Activated T-helper 1 cell treated with anti-CD3 and anti-CD28 coated beads, Interleukin-12 subunit alpha, Interleukin-12 subunit beta, Interleukin-2, Interleukin-4 antibody, amounts not matched to agents 30 ng/mL and 10 ng/mL and 1 ng/mL, durations not matched to agents 14 hours and 24 hours and 36 hours (primary cell): ENCODE measurements at regions of chr19 and their contacts with region 1.

Region 1: DNA sequence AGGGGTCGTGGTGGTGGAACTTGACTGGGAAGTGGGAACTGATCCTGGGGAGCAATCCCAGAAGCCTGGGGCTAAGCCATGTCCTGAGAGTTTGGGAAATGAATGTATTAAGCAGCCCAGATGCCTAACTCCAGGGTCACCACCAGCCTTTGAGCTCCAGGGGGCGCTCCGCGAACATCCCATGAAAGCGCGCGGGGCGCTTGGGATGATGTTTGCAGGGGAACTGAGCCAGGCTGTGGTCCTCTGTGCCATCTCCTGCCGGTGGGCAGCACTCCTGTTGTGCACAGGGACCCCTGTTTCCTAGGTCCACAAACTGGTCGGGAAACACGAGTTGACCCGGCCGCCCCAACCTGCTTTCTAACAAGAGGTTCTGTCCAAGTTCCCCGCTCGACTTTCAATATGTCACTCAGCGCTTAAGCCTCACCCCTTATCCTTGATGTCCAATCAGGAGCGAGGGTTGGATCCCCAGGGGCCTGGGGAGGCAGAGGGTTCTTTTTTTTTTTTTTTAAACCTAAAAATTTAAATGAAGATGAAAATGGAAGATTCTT is 14.4 kb downstream of the LEUTX start:
- DNase-seq: peak; percentile 61
- H3K4me3 Mint-ChIP-seq: peak overlapping the region; percentile 77
- H3K27ac Mint-ChIP-seq: no peak overlapping the region
- H3K4me1 Mint-ChIP-seq: peaks cover 5% of the 10 kb centered on the region
- H3K27me3 Mint-ChIP-seq: peaks cover 3% of the 10 kb centered on the region

Region 2: GRCh38 chr19:39480337-39481228 is 312.5 kb before region 1 on chr19 and contains the start of gene TIMM50:
- intact Hi-C with region 1: loop called (anchors 1 kb)
- DNase-seq: peak; percentile 96
- H3K4me3 Mint-ChIP-seq: peak within 1 kb of the TSS; percentile 95
- H3K27ac Mint-ChIP-seq: peak within 1 kb of the TSS; percentile 94
- H3K4me1 Mint-ChIP-seq: peaks cover 28% of the 10 kb centered on the region
- H3K27me3 Mint-ChIP-seq: no peaks in the 10 kb centered on the region
- total RNA-seq, gene TIMM50: 121 and 127 TPM in 2 replicates

Region 3: GRCh38 chr19:39824143-39825092 is 31.3 kb after region 1 on chr19:
- intact Hi-C with region 1: loop called (anchors 1 kb)
- DNase-seq: peak; percentile 87
- H3K4me3 Mint-ChIP-seq: no peak overlapping the region
- H3K27ac Mint-ChIP-seq: no peak overlapping the region
- H3K4me1 Mint-ChIP-seq: peaks cover 6% of the 10 kb centered on the region
- H3K27me3 Mint-ChIP-seq: no peaks in the 10 kb centered on the region

Region 4: GRCh38 chr19:39833464-39834286 is 40.6 kb after region 1 on chr19 and contains the start of gene DYRK1B:
- intact Hi-C with region 1: loop called (anchors 2 kb)
- DNase-seq: peak; percentile 95
- H3K4me3 Mint-ChIP-seq: peak within 1 kb of the TSS; percentile 69
- H3K27ac Mint-ChIP-seq: peak within 1 kb of the TSS; percentile 78
- H3K4me1 Mint-ChIP-seq: peaks cover 35% of the 10 kb centered on the region
- H3K27me3 Mint-ChIP-seq: no peaks in the 10 kb centered on the region
- total RNA-seq, gene DYRK1B: 4.2 and 5.5 TPM in 2 replicates

Region 5: GRCh38 chr19:40252395-40252794 is 459.3 kb after region 1 on chr19:
- intact Hi-C with region 1: no loop called
- DNase-seq: no peak
- H3K4me3 Mint-ChIP-seq: no peak overlapping the region
- H3K27ac Mint-ChIP-seq: no peak overlapping the region
- H3K4me1 Mint-ChIP-seq: no peaks in the 10 kb centered on the region
- H3K27me3 Mint-ChIP-seq: no peaks in the 10 kb centered on the region